ENCODE measurements at regions of chr11 and their contacts with region 1.

Region 1: GRCh38 chr11:47407746-47408590 is at the start of gene SLC39A13:
- DNase-seq: peak; percentile 98
- H3K4me3 ChIP-seq: peak within 1 kb of the TSS; percentile 46 to 91 (median 72)
- H3K27ac ChIP-seq: peak within 1 kb of the TSS; percentile 90
- H3K4me1 ChIP-seq: peaks cover 29% of the 10 kb centered on the region
- H3K27me3 ChIP-seq: no peaks in the 10 kb centered on the region
- CTCF ChIP-seq: peak; percentile 76 to 99
- POLR2A ChIP-seq: peak; percentile 86
- total RNA-seq, gene SLC39A13: 86.3 and 91.9 TPM in 2 replicates

Region 2: DNA sequence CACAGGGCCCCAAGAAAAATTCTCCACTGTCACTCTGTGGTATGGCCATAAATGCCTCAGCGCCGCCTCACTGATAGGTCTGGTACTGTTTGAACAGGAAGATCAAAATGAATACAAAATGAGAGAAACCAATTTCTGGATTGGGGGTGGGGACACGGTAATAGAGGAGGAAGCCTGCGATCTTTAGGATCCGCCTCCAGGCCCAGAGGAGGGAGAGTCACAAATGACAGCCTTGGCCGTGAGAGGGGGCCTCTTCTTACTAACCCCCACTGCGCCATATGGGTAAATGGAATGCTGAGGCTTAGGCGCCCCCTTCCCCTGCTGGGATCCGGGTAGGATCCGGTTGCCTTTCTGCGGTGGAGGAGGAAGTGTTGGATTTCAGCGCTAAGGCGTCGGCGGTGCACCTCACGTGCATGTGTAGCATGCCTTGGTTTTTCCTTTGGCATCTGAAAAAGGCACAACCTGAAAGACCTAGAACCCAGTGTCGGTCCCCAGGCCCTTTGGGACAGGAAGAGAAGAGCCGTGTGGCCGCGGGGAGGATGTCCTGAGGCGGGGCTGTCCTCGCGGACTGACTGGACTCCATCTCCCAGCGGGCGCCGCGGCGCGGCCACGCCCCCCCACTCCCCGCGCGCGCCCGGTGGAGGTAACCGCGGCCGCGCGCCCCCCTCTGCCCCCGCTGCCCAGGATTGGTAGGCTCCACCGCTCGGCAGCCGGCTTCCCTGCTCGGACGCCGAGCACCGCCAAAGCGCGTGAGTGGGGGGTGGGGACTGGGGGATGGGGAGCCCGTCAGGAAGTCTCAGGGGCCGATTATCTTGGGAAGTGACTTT is 138.8 kb before region 1 on chr11:
- CTCF ChIA-PET with region 1: interaction called, 4 read pairs
- POLR2A ChIA-PET with region 1: no interaction called
- dilution Hi-C with region 1: no loop called
- intact Hi-C with region 1: loop called (anchors 5 kb)
- DNase-seq: peak; percentile 85
- H3K4me3 ChIP-seq: peak overlapping the region; percentile 66 to 93 (median 70)
- H3K27ac ChIP-seq: peak overlapping the region; percentile 76
- H3K4me1 ChIP-seq: peaks cover 37% of the 10 kb centered on the region
- H3K27me3 ChIP-seq: no peaks in the 10 kb centered on the region
- CTCF ChIP-seq: no peak
- POLR2A ChIP-seq: peak; percentile 8

Region 3: GRCh38 chr11:47394322-47395222 is 13.4 kb before region 1 on chr11:
- CTCF ChIA-PET with region 1: interaction called, 9 read pairs
- POLR2A ChIA-PET with region 1: interaction called, 4 read pairs
- dilution Hi-C with region 1: no loop called
- intact Hi-C with region 1: loop called (anchors 1 kb)
- DNase-seq: peak; percentile 93
- H3K4me3 ChIP-seq: no peak overlapping the region
- H3K27ac ChIP-seq: peak overlapping the region; percentile 99
- H3K4me1 ChIP-seq: peaks cover 23% of the 10 kb centered on the region
- H3K27me3 ChIP-seq: no peaks in the 10 kb centered on the region
- CTCF ChIP-seq: no peak
- POLR2A ChIP-seq: peak; percentile 91

Region 4: GRCh38 chr11:47454180-47454644 is 46.2 kb after region 1 on chr11:
- CTCF ChIA-PET with region 1: interaction called, 9 read pairs
- POLR2A ChIA-PET with region 1: no interaction called
- dilution Hi-C with region 1: no loop called
- intact Hi-C with region 1: loop called (anchors 1 kb)
- DNase-seq: peak; percentile 75
- H3K4me3 ChIP-seq: no peak overlapping the region
- H3K27ac ChIP-seq: no peak overlapping the region
- H3K4me1 ChIP-seq: no peaks in the 10 kb centered on the region
- H3K27me3 ChIP-seq: no peaks in the 10 kb centered on the region
- CTCF ChIP-seq: peak; percentile 68 to 82
- POLR2A ChIP-seq: no peak

Region 5: DNA sequence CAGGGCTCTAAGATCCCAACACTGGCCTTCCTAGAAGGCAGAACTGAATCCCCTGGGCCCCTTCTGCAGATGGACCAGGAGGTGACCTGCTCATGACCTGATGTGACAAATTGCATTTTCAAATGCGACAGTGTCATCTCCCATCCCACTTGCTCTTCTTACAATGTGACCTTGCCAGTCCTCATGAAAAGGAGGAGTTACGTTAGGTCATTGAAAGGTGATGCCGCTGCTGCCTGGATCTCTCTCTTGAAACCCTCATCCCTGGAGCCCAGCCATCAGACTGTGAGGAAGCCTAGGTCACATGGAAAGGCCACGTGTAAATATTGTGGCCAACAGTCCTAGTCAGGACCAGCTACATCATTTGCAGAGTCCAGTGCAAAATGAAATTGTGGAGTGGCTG is 191.9 kb after region 1 on chr11:
- CTCF ChIA-PET with region 1: no interaction called
- POLR2A ChIA-PET with region 1: no interaction called
- dilution Hi-C with region 1: no loop called
- intact Hi-C with region 1: no loop called
- DNase-seq: no peak
- H3K4me3 ChIP-seq: no peak overlapping the region
- H3K27ac ChIP-seq: no peak overlapping the region
- H3K4me1 ChIP-seq: no peaks in the 10 kb centered on the region
- H3K27me3 ChIP-seq: peaks cover 12% of the 10 kb centered on the region in 2 experiments
- CTCF ChIP-seq: no peak
- POLR2A ChIP-seq: no peak

Region 6: GRCh38 chr11:47616726-47617416 is 208.9 kb after region 1 on chr11:
- CTCF ChIA-PET with region 1: interaction called, 8 read pairs
- POLR2A ChIA-PET with region 1: no interaction called
- dilution Hi-C with region 1: no loop called
- intact Hi-C with region 1: loop called (anchors 2 kb)
- DNase-seq: peak; percentile 68
- H3K4me3 ChIP-seq: no peak overlapping the region
- H3K27ac ChIP-seq: no peak overlapping the region
- H3K4me1 ChIP-seq: no peaks in the 10 kb centered on the region
- H3K27me3 ChIP-seq: no peaks in the 10 kb centered on the region
- CTCF ChIP-seq: peak; percentile 45 to 67
- POLR2A ChIP-seq: no peak

Region 7: DNA sequence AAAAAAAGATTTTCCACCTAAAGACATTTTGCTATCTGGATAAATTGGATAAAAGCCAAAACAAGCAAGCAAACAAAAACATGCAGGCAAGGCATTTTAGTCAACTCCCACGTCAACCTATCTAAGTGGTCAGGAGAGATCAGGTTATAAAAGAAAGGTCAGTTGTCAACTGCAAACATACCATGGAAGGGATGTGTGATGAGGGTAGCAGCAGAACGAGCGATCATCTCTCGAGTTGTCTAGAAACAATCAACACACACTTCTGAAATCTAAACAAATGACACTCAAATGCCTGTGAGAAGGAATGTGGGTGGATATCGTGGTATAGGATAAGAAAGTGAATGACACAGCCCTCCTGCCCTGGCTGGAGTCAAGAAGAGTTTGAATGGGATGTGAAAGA is 223.5 kb after region 1 on chr11:
- CTCF ChIA-PET with region 1: no interaction called
- POLR2A ChIA-PET with region 1: no interaction called
- dilution Hi-C with region 1: no loop called
- intact Hi-C with region 1: no loop called
- DNase-seq: peak; percentile 16
- H3K4me3 ChIP-seq: no peak overlapping the region
- H3K27ac ChIP-seq: no peak overlapping the region
- H3K4me1 ChIP-seq: no peaks in the 10 kb centered on the region
- H3K27me3 ChIP-seq: no peaks in the 10 kb centered on the region
- CTCF ChIP-seq: no peak
- POLR2A ChIP-seq: no peak